ENCODE measurements at regions of chr3 and their contacts with region 1.

Region 1: DNA sequence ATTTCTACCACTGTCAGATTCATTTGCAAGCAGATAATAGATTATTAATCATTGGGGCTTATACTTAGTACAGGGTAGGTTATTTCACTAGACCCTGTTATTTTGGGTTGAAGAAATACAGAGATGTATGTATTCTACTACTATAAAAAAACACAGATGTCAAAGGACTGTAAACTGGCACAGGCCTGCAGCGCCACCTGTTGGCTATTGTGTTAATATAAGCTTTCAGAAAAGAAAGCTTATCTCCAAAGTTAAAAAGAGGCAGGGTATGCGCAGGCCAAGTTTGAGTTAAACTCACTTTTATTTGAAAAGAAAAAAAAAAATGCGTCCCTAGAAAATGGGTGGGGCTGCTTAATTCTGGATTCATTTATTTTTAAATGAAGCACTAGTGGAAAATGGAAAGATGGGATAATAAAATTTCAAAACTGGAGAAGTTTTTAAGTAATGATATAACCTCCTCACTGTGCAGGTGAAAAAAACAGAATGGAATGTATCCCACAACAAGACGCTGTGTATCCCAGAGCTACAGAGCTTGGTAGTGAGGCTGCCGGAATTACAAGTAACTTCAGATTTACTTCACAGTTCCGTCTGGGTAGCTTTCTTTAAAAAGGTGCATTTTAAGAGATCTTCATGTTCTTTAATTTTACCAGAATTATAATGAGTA is 407.2 kb upstream of the TGFBR2 start:
- DNase-seq: peak; percentile 80
- H3K4me3 ChIP-seq: no peak overlapping the region
- H3K27ac ChIP-seq: no peak overlapping the region
- H3K4me1 ChIP-seq: peaks cover 13% of the 10 kb centered on the region
- H3K27me3 ChIP-seq: no peaks in the 10 kb centered on the region
- CTCF ChIP-seq: peak; percentile 85

Region 2: DNA sequence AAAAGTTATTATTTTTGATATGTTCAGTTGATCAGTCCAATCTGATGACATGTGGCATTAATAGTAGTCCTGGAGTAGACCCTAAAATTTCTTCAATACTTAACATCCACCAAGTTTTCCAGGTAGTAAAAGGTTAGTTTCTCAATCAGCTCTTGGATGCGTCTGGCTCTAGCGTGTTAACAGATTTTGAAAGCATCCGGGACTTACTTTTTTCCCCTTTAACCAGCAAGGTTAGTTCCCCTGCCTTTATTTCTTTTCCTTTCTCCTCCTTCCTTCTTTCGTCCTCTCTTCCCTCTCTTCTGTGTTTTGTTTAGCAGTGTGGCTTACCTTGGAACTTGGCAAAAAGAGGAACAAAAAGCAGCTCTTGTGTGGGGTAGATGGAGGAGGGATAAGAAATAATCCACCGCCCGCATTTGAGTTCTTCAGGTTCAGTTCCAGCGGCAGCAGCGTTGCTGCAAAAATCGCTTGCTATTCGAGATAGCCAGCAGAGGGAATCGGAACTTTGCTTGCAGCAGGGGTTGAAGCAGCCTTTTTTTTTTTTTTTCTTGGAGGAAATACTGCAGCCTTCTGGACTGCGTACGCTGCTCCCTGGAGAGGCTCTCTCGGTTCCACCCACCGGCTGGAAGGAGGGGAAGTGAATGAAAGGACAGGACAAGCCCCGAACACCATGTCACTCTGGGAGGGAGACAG is 918.7 kb before region 1 on chr3 and contains the start of gene RBMS3:
- CTCF ChIA-PET with region 1: no interaction called
- POLR2A ChIA-PET with region 1: no interaction called
- intact Hi-C with region 1: no loop called
- DNase-seq: peak; percentile 97
- H3K4me3 ChIP-seq: peak within 1 kb of the TSS; percentile 59
- H3K27ac ChIP-seq: peak within 1 kb of the TSS; percentile 67
- H3K4me1 ChIP-seq: peaks cover 20% of the 10 kb centered on the region
- H3K27me3 ChIP-seq: no peaks in the 10 kb centered on the region
- CTCF ChIP-seq: peak; percentile 66
- total RNA-seq, gene RBMS3: 5.9 and 7.9 TPM in 2 replicates

Region 3: GRCh38 chr3:30012941-30013543 is 186.2 kb before region 1 on chr3:
- CTCF ChIA-PET with region 1: interaction called, 13 read pairs
- POLR2A ChIA-PET with region 1: no interaction called
- intact Hi-C with region 1: loop called (anchors 1 kb)
- DNase-seq: peak; percentile 92
- H3K4me3 ChIP-seq: no peak overlapping the region
- H3K27ac ChIP-seq: no peak overlapping the region
- H3K4me1 ChIP-seq: peaks cover 24% of the 10 kb centered on the region
- H3K27me3 ChIP-seq: no peaks in the 10 kb centered on the region
- CTCF ChIP-seq: peak; percentile 87

Region 4: DNA sequence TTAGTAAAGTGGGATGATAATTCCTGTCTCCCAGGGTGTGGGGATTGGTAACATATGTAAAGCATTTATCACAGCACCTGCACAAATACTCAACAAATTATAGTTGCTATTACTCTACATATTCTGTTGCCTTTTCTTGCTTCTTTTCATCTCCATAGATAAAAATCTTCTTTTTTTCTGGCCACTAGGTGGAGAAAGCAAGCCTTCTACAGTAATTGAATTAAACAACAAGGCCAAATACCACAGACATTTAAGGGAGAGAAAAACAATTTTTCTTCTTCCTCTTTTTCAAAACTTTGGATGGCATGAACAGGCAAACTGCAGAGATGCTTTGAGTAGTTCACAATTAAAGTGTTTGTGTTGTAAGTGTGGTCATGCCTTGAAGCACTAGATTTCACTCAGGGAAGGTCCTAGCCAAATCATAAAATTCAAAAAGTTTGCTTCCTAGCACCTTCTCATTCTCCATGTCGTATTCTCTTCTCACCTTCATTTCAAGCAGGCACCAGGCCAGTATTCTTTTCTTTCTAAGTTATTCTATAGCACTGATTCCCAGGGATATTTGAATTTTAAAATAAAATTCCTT is 86.2 kb before region 1 on chr3:
- CTCF ChIA-PET with region 1: interaction called, 4 read pairs
- POLR2A ChIA-PET with region 1: no interaction called
- intact Hi-C with region 1: loop called (anchors 5 kb)
- DNase-seq: peak; percentile 79
- H3K4me3 ChIP-seq: no peak overlapping the region
- H3K27ac ChIP-seq: no peak overlapping the region
- H3K4me1 ChIP-seq: peaks cover 29% of the 10 kb centered on the region
- H3K27me3 ChIP-seq: no peaks in the 10 kb centered on the region
- CTCF ChIP-seq: peak; percentile 76

Region 5: GRCh38 chr3:30286007-30286669 is 86.9 kb after region 1 on chr3:
- CTCF ChIA-PET with region 1: no interaction called
- POLR2A ChIA-PET with region 1: no interaction called
- intact Hi-C with region 1: loop called (anchors 5 kb)
- DNase-seq: peak; percentile 93
- H3K4me3 ChIP-seq: no peak overlapping the region
- H3K27ac ChIP-seq: peak overlapping the region; percentile 48
- H3K4me1 ChIP-seq: peaks cover 56% of the 10 kb centered on the region
- H3K27me3 ChIP-seq: no peaks in the 10 kb centered on the region
- CTCF ChIP-seq: no peak

Measured in A673 (cell line).